ENCODE measurements at regions of chr2 and their contacts with region 1.

Region 1: DNA sequence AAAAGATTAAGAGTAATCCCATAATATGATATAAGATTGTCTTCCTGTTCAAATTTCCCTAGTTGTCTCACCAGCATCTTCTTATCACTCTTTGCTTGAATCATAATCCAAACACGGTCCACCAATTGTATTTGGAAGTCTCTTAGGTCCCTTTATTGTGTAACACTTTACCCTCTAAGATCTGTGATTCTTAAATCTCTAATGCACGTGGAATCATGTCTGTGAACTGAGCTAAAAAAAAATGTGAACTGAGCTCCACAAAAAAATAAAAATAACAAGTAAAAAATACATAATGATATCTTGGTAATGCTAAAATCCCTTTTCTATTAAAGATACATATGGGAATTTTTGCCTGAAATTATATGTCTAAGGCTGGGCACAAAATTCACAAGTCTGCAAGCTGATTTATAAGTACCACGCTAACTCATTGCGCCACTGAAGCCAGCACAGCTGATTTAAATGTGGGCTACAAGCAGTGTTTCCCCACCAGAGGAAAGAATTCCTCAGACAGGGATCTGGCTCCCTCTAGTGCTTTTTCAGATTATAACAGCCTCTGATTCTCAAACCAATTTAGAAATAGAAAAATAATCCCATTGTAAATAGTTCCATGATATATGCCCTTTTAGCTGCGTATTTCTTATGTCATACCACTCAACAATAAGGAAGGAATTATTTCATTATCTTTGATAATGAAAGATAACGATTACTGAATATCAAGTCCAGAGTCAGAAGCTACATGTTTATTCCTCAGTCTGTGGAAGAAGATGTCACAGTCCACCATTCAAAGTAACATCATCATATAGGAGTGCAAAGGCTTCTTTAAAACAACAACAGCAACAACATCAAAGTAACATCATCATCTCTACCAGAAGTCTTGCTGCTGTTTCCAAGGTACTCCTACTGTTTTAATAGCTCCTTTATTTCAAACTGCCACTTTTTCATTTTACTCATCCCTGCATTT is 22.9 kb downstream of the RBM43 start:
- DNase-seq: peak; percentile 77

Region 2: GRCh38 chr2:149597668-149598326 is 1641.0 kb before region 1 on chr2:
- in situ Hi-C with region 1: loop called (anchors 25 kb)
- DNase-seq: peak; percentile 73

Region 3: GRCh38 chr2:151063271-151063670 is 175.5 kb before region 1 on chr2:
- in situ Hi-C with region 1: no loop called
- DNase-seq: no peak

Region 4: DNA sequence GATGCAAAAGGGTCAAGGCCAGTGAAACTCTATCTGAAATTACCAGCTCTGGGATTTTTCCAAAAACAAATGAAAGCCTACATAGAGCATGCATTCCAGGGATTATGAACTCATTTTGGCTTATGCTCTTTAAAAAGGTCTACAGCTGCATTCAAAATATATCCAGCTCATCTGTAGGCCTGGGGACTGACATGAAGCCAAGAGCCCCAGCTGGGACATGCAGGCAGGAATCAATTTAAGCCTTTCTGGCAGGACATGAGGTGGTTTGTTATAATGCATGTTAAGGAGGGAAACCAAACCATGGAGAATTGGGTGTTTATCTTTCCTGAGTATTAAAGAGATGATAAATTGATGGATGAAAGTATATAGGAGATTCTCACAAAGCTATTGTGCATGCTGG is 141.7 kb before region 1 on chr2:
- in situ Hi-C with region 1: no loop called
- DNase-seq: no peak

Region 5: DNA sequence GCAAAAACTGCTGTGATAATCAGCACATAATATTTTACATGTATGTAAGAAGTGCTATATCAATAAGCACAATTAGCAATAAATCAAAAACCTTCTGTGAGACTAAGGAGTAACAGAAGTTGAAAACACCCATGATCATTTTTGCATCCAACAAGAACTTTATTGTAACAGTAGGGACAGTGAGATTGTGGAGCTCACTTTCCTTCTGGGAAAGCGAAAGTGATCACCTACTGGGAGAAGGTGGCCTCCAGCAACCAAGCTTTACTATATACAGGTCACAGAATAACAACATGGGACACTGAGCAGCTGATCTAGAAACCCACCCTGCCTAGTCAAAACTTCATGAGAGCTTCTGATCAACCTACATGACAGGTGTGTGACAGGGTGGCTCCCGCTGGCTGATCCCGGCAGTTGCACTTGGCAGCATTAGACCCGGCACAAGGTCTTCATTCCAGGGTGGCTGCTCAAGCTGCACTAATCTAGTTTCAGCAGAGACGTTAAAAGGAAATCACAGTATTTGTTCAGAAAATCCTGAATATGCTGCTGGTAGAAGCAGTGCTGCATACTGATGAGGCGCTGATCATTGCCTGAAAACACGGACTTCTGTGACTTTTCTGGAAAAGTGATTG is 652.9 kb after region 1 on chr2:
- in situ Hi-C with region 1: no loop called
- DNase-seq: no peak